GM12878 (cell line): ENCODE measurements at regions of chr15 and their contacts with region 1.

Region 1: DNA sequence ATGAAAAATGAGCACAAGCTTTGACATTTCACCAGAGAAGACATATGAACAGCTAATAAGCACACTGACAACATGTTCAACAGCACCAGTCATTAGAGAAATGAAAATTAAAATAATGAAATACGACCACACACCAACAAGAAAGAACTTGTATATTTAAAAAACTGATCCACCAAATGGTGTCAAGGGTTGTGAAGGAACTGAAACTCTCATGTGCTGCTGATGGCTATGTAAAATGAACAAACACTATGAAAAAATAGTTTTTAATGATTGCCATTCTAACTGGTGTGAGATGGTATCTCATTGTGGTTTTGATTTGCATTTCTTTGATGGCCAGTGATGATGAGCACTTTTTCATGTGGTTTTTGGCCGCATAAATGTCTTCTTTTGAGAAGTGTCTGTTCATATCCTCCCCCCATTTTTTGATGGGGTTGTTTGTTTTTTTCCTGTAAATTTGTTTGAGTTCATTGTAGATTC is 193.8 kb downstream of the SCAPER start:
- DNase-seq: peak; percentile 85
- ATAC-seq: peak; percentile 99
- H3K4me3 ChIP-seq: no peak overlapping the region
- H3K27ac ChIP-seq: peak overlapping the region; percentile 3; the same call in 1 of the 2 replicates
- H3K4me1 ChIP-seq: no peaks in the 10 kb centered on the region
- H3K27me3 ChIP-seq: no peaks in the 10 kb centered on the region
- CTCF ChIP-seq: no peak
- EP300 ChIP-seq: peak; percentile 83 to 94; a peak in 3 of 4 replicates
- POLR2A ChIP-seq: no peak
- RAD21 ChIP-seq: no peak

Region 2: DNA sequence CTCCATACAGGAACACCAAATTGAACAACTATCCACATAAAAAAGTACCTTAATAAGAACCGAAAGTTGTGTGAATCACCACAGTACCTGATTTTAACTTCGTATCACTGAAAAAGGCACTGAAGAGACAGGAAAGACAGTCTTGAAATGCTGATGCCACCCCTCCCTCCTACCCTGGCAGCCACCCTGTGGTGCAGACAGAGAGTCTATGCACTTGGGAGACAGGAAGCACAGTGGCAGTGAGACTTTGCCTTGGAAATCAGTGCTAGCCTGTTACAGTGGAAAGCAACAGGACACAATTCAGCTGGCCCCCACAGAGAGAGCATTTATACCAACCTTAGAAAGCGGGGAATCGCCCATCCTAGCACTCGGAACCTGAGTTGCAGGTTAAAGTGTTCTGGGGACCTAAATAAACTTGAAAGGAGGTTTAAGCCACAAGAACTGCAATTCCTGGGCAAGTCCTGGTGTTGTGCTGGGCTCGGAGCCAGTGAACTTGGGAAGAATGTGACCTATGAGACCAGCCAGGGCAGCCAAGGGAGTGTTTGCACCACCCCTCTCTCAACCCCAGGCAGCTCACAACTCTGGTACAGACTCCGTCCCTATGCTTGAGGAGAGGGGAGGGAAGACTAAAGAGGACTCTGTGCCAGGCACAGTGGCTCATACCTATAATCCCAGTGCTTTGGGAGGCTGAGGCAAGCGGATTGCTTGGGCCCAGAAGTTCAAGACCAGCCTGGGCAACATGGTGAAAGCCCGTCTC is 134.7 kb before region 1 on chr15:
- CTCF ChIA-PET with region 1: no interaction called
- POLR2A ChIA-PET with region 1: no interaction called
- RAD21 ChIA-PET with region 1: no interaction called
- SMC1A ChIA-PET with region 1: no interaction called
- in situ Hi-C with region 1: no loop called
- intact Hi-C with region 1: loop called (anchors 10 kb)
- DNase-seq: peak; percentile 21
- ATAC-seq: no peak
- H3K4me3 ChIP-seq: no peak overlapping the region
- H3K27ac ChIP-seq: no peak overlapping the region
- H3K4me1 ChIP-seq: peaks cover 20% of the 10 kb centered on the region
- H3K27me3 ChIP-seq: no peaks in the 10 kb centered on the region
- CTCF ChIP-seq: no peak
- EP300 ChIP-seq: no peak
- POLR2A ChIP-seq: no peak
- RAD21 ChIP-seq: no peak

Region 3: GRCh38 chr15:76678766-76679165 is 32.6 kb before region 1 on chr15:
- CTCF ChIA-PET with region 1: no interaction called
- POLR2A ChIA-PET with region 1: no interaction called
- RAD21 ChIA-PET with region 1: no interaction called
- SMC1A ChIA-PET with region 1: no interaction called
- in situ Hi-C with region 1: no loop called
- intact Hi-C with region 1: no loop called
- DNase-seq: no peak
- ATAC-seq: no peak
- H3K4me3 ChIP-seq: no peak overlapping the region
- H3K27ac ChIP-seq: no peak overlapping the region
- H3K4me1 ChIP-seq: no peaks in the 10 kb centered on the region
- H3K27me3 ChIP-seq: no peaks in the 10 kb centered on the region; a peak in 2 of 4 replicates
- CTCF ChIP-seq: no peak
- EP300 ChIP-seq: no peak
- POLR2A ChIP-seq: no peak
- RAD21 ChIP-seq: no peak